HAP-1 (cell line): ENCODE measurements at regions of chr6 and their contacts with region 1.

Region 1: DNA sequence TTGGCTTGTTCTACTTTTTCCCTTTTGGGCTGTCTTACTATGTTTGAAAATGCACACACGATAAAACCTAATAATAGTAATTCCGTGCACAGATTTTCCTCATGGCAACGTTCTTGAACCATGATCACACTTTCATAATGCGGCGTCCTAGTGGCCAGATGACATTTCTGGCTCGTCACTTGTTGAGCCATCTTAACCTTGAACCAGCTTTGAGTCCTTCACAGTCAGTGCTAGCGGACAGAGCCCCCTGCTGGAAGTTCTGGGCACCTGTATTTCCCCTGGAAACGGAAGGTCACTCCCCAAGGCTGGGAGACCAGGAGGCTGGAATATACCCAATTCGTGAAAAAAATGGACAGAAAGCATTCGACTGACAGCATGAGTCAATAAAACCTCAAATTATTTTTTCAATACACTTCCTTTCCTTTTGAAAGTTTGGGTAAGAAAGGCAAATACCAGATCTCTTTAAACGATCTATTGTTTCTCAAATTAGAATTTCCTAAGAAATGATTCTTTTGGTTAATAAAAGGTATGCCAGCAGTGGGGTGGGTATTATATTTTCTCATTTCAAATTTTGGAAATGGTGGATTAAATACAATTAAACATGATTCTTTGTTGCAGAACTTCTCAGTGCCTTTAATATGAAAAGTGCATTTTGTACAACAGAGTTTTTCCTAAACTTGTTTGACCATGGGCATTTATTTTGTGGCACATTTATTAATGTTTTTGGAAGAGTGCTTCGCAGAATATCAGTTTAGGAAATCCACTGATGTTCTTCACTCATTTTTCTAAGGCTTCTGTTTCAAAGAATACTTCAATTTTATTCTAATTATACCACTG is 542.3 kb downstream of the QKI start:
- DNase-seq: peak; percentile 79 to 88
- H3K4me3 ChIP-seq: no peak overlapping the region
- H3K4me1 ChIP-seq: 0 out of 2 replicates have a peak, but pooled peaks cover 3% of the 10 kb centered on the region
- H3K27me3 ChIP-seq: no peaks in the 10 kb centered on the region

Region 2: DNA sequence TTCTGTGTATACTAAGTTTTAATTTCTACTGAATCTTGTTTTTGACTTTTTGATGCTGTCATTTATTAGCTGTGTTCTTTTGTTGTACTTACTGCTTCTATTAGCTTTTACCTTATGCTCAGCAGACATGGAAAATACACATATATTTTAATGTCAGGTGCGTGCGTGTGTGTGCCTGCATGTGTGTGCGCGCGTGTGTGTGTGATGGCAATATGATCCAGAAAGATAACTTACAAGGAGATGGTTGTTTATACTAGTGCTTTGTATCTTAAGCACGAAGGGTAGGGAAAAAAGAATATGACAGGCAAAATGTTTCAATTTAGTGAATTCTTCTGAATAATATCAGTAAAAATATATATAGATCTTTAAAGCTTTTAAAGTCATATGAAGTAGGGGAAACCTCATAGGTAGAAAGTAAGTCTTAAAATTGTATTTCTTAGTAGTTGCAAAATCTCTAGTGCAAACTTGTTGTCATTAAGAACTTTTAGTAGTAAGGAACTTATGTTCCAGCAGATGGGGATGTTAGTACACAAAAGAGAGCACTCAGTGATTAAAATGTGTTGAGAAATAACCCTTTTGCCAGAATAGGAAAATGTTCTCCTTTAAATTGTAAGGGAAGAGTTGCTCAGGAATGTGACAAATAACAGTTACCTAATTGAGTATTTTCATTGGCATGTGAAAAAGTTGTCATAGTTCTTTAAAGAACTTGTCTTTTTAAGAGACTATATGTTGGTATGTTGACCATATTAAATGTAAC is 529.1 kb before region 1 on chr6:
- in situ Hi-C with region 1: loop called (anchors 10 kb)
- DNase-seq: peak in 1 of 2 experiments; percentile 42
- H3K4me3 ChIP-seq: no peak overlapping the region
- H3K4me1 ChIP-seq: peaks cover 18% of the 10 kb centered on the region
- H3K27me3 ChIP-seq: no peaks in the 10 kb centered on the region

Region 3: GRCh38 chr6:164286011-164286410 is 329.2 kb after region 1 on chr6:
- in situ Hi-C with region 1: no loop called
- DNase-seq: no peak
- H3K4me3 ChIP-seq: no peak overlapping the region
- H3K4me1 ChIP-seq: no peaks in the 10 kb centered on the region
- H3K27me3 ChIP-seq: no peaks in the 10 kb centered on the region

Region 4: GRCh38 chr6:164612751-164613150 is 656.0 kb after region 1 on chr6:
- in situ Hi-C with region 1: no loop called
- DNase-seq: no peak
- H3K4me3 ChIP-seq: no peak overlapping the region
- H3K4me1 ChIP-seq: no peaks in the 10 kb centered on the region
- H3K27me3 ChIP-seq: no peaks in the 10 kb centered on the region

Region 5: GRCh38 chr6:164967102-164967501 is 1010.3 kb after region 1 on chr6:
- in situ Hi-C with region 1: no loop called
- DNase-seq: no peak
- H3K4me3 ChIP-seq: no peak overlapping the region
- H3K4me1 ChIP-seq: no peaks in the 10 kb centered on the region
- H3K27me3 ChIP-seq: no peaks in the 10 kb centered on the region